Psoas muscle (tissue), 8 donors: ENCODE measurements at regions of chr4 and their contacts with region 1.

Region 1: GRCh38 chr4:153553819-153554170 is 87.6 kb downstream of the TMEM131L start:
- DNase-seq: no peak
- ATAC-seq: peak; percentile 86 to 94 (median 90)
- H3K4me3 ChIP-seq: peak overlapping the region; percentile 39
- H3K27ac ChIP-seq: peak overlapping the region; percentile 95
- H3K4me1 ChIP-seq: peaks cover 47% of the 10 kb centered on the region
- H3K27me3 ChIP-seq: no peaks in the 10 kb centered on the region
- CTCF ChIP-seq: no peak

Region 2: GRCh38 chr4:153221783-153222706 is 331.8 kb before region 1 on chr4:
- intact Hi-C with region 1: no loop called
- DNase-seq: peak; percentile 57 to 74
- ATAC-seq: peak; percentile 55 to 83 (median 72)
- H3K4me3 ChIP-seq: peak overlapping the region; percentile 97
- H3K27ac ChIP-seq: peak overlapping the region; percentile 93
- H3K4me1 ChIP-seq: peaks cover 21% of the 10 kb centered on the region
- H3K27me3 ChIP-seq: no peaks in the 10 kb centered on the region
- CTCF ChIP-seq: no peak

Region 3: GRCh38 chr4:153506341-153507309 is 47.2 kb before region 1 on chr4:
- intact Hi-C with region 1: loop called in 1 of 2 experiments (anchors 5 kb)
- DNase-seq: no peak
- ATAC-seq: peak; percentile 39 to 83 (median 76)
- H3K4me3 ChIP-seq: no peak overlapping the region
- H3K27ac ChIP-seq: peak overlapping the region; percentile 75
- H3K4me1 ChIP-seq: peaks cover 54% of the 10 kb centered on the region
- H3K27me3 ChIP-seq: no peaks in the 10 kb centered on the region
- CTCF ChIP-seq: no peak